CD8-positive, alpha-beta T cell (primary cell): ENCODE measurements at regions of chr15 and their contacts with region 1.

Region 1: GRCh38 chr15:75367913-75368688 is at the start of gene MAN2C1:
- DNase-seq: peak; percentile 76 to 97 (median 91)
- ATAC-seq: peak; percentile 97
- H3K4me3 ChIP-seq: peak within 1 kb of the TSS; percentile 86 to 97
- H3K4me3 Mint-ChIP-seq: peak within 1 kb of the TSS; percentile 91
- H3K27ac ChIP-seq: peak within 1 kb of the TSS; percentile 89 to 96
- H3K27ac Mint-ChIP-seq: peak within 1 kb of the TSS; percentile 94
- H3K4me1 ChIP-seq: peaks cover 15% of the 10 kb centered on the region
- H3K4me1 Mint-ChIP-seq: peaks cover 24% of the 10 kb centered on the region
- H3K27me3 ChIP-seq: no peaks in the 10 kb centered on the region
- H3K27me3 Mint-ChIP-seq: no peaks in the 10 kb centered on the region
- CTCF ChIP-seq: no peak
- total RNA-seq, gene MAN2C1: 342 to 373 TPM

Region 2: DNA sequence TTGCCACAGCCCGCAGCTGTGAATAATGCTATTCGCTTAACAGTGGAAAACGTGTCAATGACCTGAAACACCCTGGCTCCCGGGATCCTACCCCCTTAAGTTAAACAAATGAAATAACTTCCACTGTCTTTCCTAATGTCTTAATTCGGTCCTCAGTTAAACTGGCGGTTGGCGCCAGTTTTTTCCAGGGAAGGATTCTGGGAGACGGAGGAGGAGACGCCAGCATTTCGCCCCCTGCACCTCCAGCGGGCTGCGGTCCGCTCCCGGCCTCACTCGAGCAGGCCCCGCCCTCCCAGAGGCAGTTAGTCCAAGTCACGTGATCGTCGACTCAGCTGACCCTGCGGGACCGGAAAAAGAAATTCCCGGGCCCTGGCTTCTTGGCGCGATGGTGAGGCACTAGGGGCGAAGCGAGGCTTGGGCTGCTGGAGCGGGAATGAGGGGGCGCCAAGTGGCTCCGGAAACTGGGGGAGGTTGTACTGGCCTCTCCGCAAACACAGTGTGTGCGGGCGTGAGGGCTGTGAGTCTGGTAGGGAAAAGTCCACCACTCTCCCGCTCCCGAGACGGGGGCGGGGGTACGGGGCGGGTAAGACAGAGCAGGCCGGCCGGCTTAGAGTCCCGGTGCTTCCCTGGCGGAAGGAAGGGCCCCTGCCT is 32.3 kb before region 1 on chr15 and contains the start of gene COMMD4:
- CTCF ChIA-PET with region 1: interaction called, 3 read pairs
- POLR2A ChIA-PET with region 1: interaction called, 6 read pairs
- intact Hi-C with region 1: loop called in 1 of 2 experiments (anchors 1 kb)
- DNase-seq: peak in 8 of 9 experiments; percentile 49 to 84 (median 68)
- ATAC-seq: peak; percentile 67
- H3K4me3 ChIP-seq: peak within 1 kb of the TSS; percentile 86 to 92
- H3K4me3 Mint-ChIP-seq: peak within 1 kb of the TSS; percentile 86
- H3K27ac ChIP-seq: peak within 1 kb of the TSS; percentile 43 to 69
- H3K27ac Mint-ChIP-seq: peak within 1 kb of the TSS; percentile 85
- H3K4me1 ChIP-seq: peaks cover 13% of the 10 kb centered on the region
- H3K4me1 Mint-ChIP-seq: peaks cover 19% of the 10 kb centered on the region
- H3K27me3 ChIP-seq: no peaks in the 10 kb centered on the region
- H3K27me3 Mint-ChIP-seq: no peaks in the 10 kb centered on the region
- CTCF ChIP-seq: no peak
- total RNA-seq, gene COMMD4: 10.1 to 10.2 TPM

Region 3: DNA sequence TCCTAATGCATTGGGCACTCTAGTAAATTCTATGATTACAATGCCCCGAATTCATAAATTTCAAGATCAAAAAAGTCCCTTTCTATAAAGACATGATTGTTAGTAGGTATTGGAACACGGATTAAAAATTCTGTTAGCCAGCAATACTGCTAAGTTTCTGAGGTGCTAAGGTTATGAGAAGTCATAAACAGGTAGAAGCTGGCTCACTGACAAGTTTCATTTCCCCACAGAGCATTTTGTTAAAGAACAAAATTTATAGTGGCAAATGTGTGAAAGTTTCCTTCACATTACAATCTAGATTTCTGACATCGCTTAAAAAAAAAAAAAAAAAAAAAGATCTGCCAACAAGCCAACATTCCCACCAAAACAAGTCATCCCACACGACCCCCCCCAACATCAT is 12.7 kb after region 1 on chr15:
- CTCF ChIA-PET with region 1: interaction called, 16 read pairs
- POLR2A ChIA-PET with region 1: interaction called, 11 read pairs
- intact Hi-C with region 1: no loop called
- DNase-seq: no peak
- ATAC-seq: no peak
- H3K4me3 ChIP-seq: no peak overlapping the region
- H3K4me3 Mint-ChIP-seq: no peak overlapping the region
- H3K27ac ChIP-seq: no peak overlapping the region
- H3K27ac Mint-ChIP-seq: peak overlapping the region; percentile 15
- H3K4me1 ChIP-seq: no peaks in the 10 kb centered on the region
- H3K4me1 Mint-ChIP-seq: no peaks in the 10 kb centered on the region
- H3K27me3 ChIP-seq: no peaks in the 10 kb centered on the region
- H3K27me3 Mint-ChIP-seq: no peaks in the 10 kb centered on the region
- CTCF ChIP-seq: no peak

Region 4: GRCh38 chr15:75625542-75626347 is 257.6 kb after region 1 on chr15 and contains the start of gene SNUPN:
- CTCF ChIA-PET with region 1: interaction called, 9 read pairs
- POLR2A ChIA-PET with region 1: interaction called, 14 read pairs
- intact Hi-C with region 1: loop called (anchors 1 kb)
- DNase-seq: peak; percentile 83 to 98 (median 93)
- ATAC-seq: peak; percentile 93
- H3K4me3 ChIP-seq: peak within 1 kb of the TSS; percentile 100
- H3K4me3 Mint-ChIP-seq: peak within 1 kb of the TSS; percentile 95
- H3K27ac ChIP-seq: peak within 1 kb of the TSS; percentile 75 to 99
- H3K27ac Mint-ChIP-seq: peak within 1 kb of the TSS; percentile 99
- H3K4me1 ChIP-seq: peaks cover 16% of the 10 kb centered on the region
- H3K4me1 Mint-ChIP-seq: peaks cover 34% of the 10 kb centered on the region
- H3K27me3 ChIP-seq: no peaks in the 10 kb centered on the region
- H3K27me3 Mint-ChIP-seq: no peaks in the 10 kb centered on the region
- CTCF ChIP-seq: no peak
- total RNA-seq, gene SNUPN: 7.7 TPM

Region 5: GRCh38 chr15:75647370-75648155 is 279.5 kb after region 1 on chr15 and contains the start of gene SNX33:
- CTCF ChIA-PET with region 1: interaction called, 22 read pairs
- POLR2A ChIA-PET with region 1: interaction called, 16 read pairs
- intact Hi-C with region 1: no loop called
- DNase-seq: peak in 8 of 9 experiments; percentile 12 to 68 (median 54)
- ATAC-seq: peak; percentile 68
- H3K4me3 ChIP-seq: peak within 1 kb of the TSS; percentile 79 to 89
- H3K4me3 Mint-ChIP-seq: peak within 1 kb of the TSS; percentile 82
- H3K27ac ChIP-seq: peak within 1 kb of the TSS; percentile 31 to 51
- H3K27ac Mint-ChIP-seq: peak within 1 kb of the TSS; percentile 57
- H3K4me1 ChIP-seq: peaks cover 20% of the 10 kb centered on the region
- H3K4me1 Mint-ChIP-seq: peaks cover 26% of the 10 kb centered on the region
- H3K27me3 ChIP-seq: no peaks in the 10 kb centered on the region
- H3K27me3 Mint-ChIP-seq: no peaks in the 10 kb centered on the region
- CTCF ChIP-seq: no peak
- total RNA-seq, gene SNX33: 0.56 to 0.95 TPM

Region 6: DNA sequence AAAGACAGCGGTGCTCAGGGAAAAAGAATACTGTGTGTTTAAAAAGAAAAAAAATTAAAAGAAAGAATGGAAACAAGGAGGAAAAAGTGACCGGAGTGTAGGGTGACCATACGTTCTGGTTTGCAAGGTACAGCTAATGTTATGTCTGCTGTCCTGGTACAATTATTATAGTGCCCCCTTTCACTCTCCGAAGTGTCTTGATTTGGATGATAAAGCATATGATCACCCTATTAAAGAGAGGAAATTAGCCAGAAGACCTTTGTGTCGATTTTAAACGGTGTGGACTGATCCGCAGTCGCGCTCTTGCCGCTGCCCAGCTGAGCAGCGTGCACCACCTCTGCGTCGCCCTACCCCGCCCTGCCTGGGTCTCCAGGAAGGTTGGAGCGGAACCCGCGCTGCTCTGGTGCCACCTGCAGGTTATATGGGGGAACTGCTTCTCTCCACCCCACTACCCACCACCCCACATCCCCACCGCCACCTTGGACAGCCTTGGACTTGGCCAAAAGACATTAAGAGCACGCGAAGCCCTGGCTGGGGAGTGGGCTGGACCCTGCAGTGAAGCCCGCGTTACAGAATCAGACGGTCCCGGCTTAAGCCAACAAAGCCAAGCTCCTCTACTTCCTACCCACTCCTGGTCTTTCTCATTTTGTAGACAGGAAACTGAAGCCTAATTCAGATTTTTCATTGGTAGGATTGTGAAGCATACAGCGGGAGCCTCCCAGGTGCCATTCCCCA is 433.9 kb after region 1 on chr15:
- CTCF ChIA-PET with region 1: interaction called, 4 read pairs
- POLR2A ChIA-PET with region 1: no interaction called
- intact Hi-C with region 1: loop called in 1 of 2 experiments (anchors 5 kb)
- DNase-seq: peak; percentile 53 to 86 (median 78)
- ATAC-seq: peak; percentile 100
- H3K4me3 ChIP-seq: no peak overlapping the region
- H3K4me3 Mint-ChIP-seq: peak overlapping the region; percentile 58
- H3K27ac ChIP-seq: no peak overlapping the region
- H3K27ac Mint-ChIP-seq: no peak overlapping the region
- H3K4me1 ChIP-seq: peaks cover 5% of the 10 kb centered on the region
- H3K4me1 Mint-ChIP-seq: peaks cover 3% of the 10 kb centered on the region
- H3K27me3 ChIP-seq: peaks cover 0 to 10% of the 10 kb centered on the region in 2 experiments
- H3K27me3 Mint-ChIP-seq: peaks cover 31% of the 10 kb centered on the region
- CTCF ChIP-seq: peak; percentile 75

Region 7: GRCh38 chr15:75817138-75817935 is 449.2 kb after region 1 on chr15:
- CTCF ChIA-PET with region 1: no interaction called
- POLR2A ChIA-PET with region 1: no interaction called
- intact Hi-C with region 1: no loop called
- DNase-seq: peak in 1 of 9 experiments; percentile 16
- ATAC-seq: no peak
- H3K4me3 ChIP-seq: no peak overlapping the region
- H3K4me3 Mint-ChIP-seq: no peak overlapping the region
- H3K27ac ChIP-seq: no peak overlapping the region
- H3K27ac Mint-ChIP-seq: peak overlapping the region; percentile 25
- H3K4me1 ChIP-seq: no peaks in the 10 kb centered on the region
- H3K4me1 Mint-ChIP-seq: peaks cover 6% of the 10 kb centered on the region
- H3K27me3 ChIP-seq: no peaks in the 10 kb centered on the region
- H3K27me3 Mint-ChIP-seq: no peaks in the 10 kb centered on the region
- CTCF ChIP-seq: no peak

Region 8: DNA sequence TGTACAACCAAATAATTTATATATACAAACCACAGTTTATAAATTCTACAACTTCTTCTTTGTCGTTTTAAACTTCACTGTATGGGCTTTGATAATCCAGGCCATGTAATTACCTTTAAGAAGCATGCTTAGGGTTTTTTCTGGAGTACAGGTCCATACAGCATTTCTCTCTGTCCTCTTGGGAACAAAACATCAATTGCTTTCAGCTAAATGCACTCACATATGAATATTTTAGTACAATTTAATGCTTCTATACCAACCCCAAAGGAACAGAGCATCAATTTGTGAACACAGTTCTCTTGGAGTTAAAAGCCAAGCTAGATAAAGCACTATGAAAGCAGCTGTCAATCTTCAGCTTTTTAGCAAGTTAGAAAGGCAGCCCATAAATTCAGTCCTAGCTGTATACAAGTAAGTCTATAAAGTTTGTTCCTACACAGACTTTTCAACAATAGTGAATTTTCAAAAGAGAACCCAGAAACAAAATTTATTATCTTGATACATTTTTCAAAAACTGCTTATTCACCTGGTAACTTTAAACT is 877.0 kb after region 1 on chr15:
- CTCF ChIA-PET with region 1: no interaction called
- POLR2A ChIA-PET with region 1: no interaction called
- intact Hi-C with region 1: no loop called
- DNase-seq: no peak
- ATAC-seq: no peak
- H3K4me3 ChIP-seq: no peak overlapping the region
- H3K4me3 Mint-ChIP-seq: no peak overlapping the region
- H3K27ac ChIP-seq: no peak overlapping the region
- H3K27ac Mint-ChIP-seq: no peak overlapping the region
- H3K4me1 ChIP-seq: no peaks in the 10 kb centered on the region
- H3K4me1 Mint-ChIP-seq: no peaks in the 10 kb centered on the region
- H3K27me3 ChIP-seq: no peaks in the 10 kb centered on the region
- H3K27me3 Mint-ChIP-seq: no peaks in the 10 kb centered on the region
- CTCF ChIP-seq: no peak